Body of pancreas (tissue), 4 donors: ENCODE measurements at regions of chr19 and their contacts with region 1.

Region 1: GRCh38 chr19:5805465-5806132 is 732 bp downstream of the NRTN start:
- DNase-seq: peak; percentile 87 to 92 (median 90)
- ATAC-seq: peak; percentile 72
- H3K4me3 ChIP-seq: peak overlapping the region; percentile 29 to 64
- H3K27ac ChIP-seq: peak overlapping the region; percentile 81 to 97 (median 84)
- H3K4me1 ChIP-seq: peaks cover 42% of the 10 kb centered on the region
- H3K27me3 ChIP-seq: no peaks in the 10 kb centered on the region
- CTCF ChIP-seq: peak; percentile 86 to 96 (median 89)
- POLR2A ChIP-seq: peak; percentile 38 to 72 (median 49)

Region 2: DNA sequence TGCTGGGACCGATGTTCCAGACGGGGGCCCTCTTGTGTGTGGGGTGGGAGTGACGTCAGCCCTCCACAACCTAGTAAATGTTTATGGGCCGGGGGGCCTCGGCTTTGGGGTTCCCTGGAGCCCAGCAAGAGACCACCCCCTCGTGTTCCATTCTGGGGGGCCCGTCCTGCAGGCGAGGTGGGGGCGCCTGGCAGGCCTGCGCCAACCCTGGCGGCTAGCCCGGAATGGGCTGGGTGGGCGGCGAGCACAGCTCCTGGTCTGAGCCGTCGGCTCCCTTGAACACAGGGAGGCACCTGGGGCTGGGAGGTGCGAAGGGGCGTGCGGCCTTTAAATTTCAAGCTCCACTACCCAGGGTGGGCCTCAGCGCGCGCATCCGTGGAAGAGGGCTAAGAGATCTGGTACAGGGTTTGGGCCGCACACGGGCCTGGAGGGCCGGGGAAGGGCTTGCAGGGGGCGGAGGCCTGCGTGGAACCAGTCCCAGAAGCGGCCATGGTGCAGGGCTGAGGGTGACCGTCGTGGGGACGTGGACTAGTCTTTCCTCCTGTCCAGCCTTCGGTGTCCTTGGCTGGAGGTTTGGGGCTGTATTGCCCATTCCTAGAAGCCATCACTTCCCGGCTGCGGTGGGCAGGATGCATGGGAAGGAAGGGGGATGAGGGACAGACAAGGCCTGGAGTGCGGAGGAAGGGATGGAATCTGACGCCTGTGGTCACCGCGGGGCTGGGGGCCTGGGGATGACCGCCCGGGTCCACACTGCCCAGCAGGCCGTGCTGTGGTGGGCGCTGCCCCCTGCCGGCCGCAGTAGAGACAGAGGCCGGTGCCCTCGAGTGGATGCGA is 86.6 kb after region 1 on chr19:
- intact Hi-C with region 1: loop called (anchors 5 kb)
- DNase-seq: peak; percentile 45 to 62 (median 50)
- ATAC-seq: peak; percentile 67
- H3K4me3 ChIP-seq: no peak overlapping the region
- H3K27ac ChIP-seq: no peak overlapping the region
- H3K4me1 ChIP-seq: peaks cover 4% of the 10 kb centered on the region
- H3K27me3 ChIP-seq: no peaks in the 10 kb centered on the region
- CTCF ChIP-seq: peak; percentile 47 to 74 (median 62)
- POLR2A ChIP-seq: peak in 1 of 3 donors; percentile 20